Panc1 (cell line): ENCODE measurements at regions of chr1 and their contacts with region 1.

Region 1: DNA sequence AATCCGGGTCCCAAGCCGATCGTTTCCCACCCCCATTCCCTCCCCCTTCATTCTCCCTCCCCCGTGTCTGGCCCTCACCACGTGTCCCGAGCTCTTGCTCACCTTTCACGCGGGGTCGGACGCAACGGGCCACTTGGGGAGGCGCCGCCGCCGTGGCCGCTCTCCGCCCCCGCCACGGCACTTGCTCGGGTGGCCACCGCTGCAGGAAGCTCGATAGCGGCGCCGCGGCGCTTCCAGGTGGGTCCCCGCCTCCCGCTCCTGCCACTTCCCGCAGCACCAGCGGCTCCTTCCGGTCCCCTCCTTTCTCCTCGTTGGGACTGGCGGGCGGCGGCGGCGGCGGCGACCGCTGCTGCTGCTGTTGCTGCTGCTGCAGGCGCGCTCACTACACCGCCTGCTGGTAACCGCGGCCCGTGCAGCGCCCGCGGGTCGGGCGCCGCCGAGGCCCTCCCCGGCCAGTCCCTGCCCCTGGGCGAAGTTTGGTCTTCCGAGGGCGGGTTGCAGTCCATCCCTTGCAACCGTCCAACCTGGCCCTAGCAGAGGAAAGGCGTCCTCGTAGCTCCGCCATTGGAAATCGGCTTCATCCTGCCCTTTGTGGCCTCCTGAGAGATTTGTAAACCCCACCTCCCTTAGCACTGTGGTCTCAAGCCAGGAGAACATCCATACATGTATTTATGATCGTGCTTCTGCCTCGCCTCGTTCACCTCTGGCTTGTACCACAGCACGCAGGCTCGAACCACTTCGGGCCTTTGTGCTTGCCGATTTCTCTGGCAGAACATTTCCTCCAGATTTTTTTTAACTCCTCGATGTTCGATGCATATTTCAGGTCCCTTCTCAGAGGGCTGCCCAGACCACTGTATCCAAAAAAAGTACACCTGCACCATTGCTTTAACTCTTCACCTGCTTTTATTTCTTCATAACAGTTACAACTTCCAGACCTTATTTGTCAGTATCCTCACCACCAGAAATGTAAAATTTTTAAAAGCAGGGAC is 996 bp upstream of the ZZZ3 start:
- DNase-seq: peak; percentile 54
- ATAC-seq: peak; percentile 90
- H3K4me3 ChIP-seq: peak overlapping the region; percentile 69 to 98
- H3K27ac ChIP-seq: peak overlapping the region; percentile 99
- H3K4me1 ChIP-seq: peaks cover 27% of the 10 kb centered on the region
- H3K27me3 ChIP-seq: no peaks in the 10 kb centered on the region
- CTCF ChIP-seq: peak; percentile 95

Region 2: GRCh38 chr1:77671836-77672235 is 11.6 kb before region 1 on chr1:
- CTCF ChIA-PET with region 1: no interaction called
- POLR2A ChIA-PET with region 1: interaction called, 12 read pairs
- in situ Hi-C with region 1: no loop called
- intact Hi-C with region 1: no loop called
- DNase-seq: no peak
- ATAC-seq: peak; percentile 11; the same call in 1 of the 2 replicates
- H3K4me3 ChIP-seq: no peak overlapping the region
- H3K27ac ChIP-seq: no peak overlapping the region
- H3K4me1 ChIP-seq: peaks cover 27% of the 10 kb centered on the region
- H3K27me3 ChIP-seq: no peaks in the 10 kb centered on the region
- CTCF ChIP-seq: no peak

Region 3: DNA sequence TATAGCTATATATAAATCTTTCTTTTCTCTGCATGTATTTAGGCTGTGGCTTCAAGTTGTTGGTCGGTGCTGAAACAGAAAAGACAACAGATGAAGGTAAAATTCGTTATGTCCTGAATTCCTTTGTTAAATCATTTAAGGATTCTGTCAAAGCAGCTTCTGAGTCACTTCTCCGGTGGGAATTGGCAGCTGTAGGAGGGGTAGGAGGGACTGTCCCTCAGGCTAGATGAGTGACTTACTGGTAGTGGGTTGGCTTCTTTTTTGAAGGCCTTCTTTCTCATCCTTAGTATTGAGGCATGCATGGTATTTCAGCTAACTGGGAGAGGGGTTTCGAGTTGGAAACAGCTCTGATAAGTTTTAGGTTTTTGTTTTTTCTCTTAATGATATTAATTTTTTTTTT is 182.8 kb after region 1 on chr1:
- CTCF ChIA-PET with region 1: no interaction called
- POLR2A ChIA-PET with region 1: interaction called, 10 read pairs
- in situ Hi-C with region 1: no loop called
- intact Hi-C with region 1: no loop called
- DNase-seq: no peak
- ATAC-seq: no peak
- H3K4me3 ChIP-seq: no peak overlapping the region
- H3K27ac ChIP-seq: no peak overlapping the region
- H3K4me1 ChIP-seq: no peaks in the 10 kb centered on the region
- H3K27me3 ChIP-seq: no peaks in the 10 kb centered on the region
- CTCF ChIP-seq: no peak